ENCODE measurements at regions of chr7 and their contacts with region 1.

Region 1: GRCh38 chr7:85023045-85023712 is 163.7 kb downstream of the SEMA3D start:
- DNase-seq: no peak
- ATAC-seq: no peak
- H3K4me3 ChIP-seq: no peak overlapping the region
- H3K27ac ChIP-seq: no peak overlapping the region
- H3K4me1 ChIP-seq: no peaks in the 10 kb centered on the region
- H3K27me3 ChIP-seq: no peaks in the 10 kb centered on the region

Region 2: GRCh38 chr7:83936056-83936708 is 1087.0 kb before region 1 on chr7:
- intact Hi-C with region 1: loop called in 2 of 4 experiments (anchors 5 to 10 kb)
- DNase-seq: peak in 2 of 3 donors; percentile 28 to 54
- ATAC-seq: peak; percentile 65 to 74
- H3K4me3 ChIP-seq: no peak overlapping the region
- H3K27ac ChIP-seq: no peak overlapping the region
- H3K4me1 ChIP-seq: no peaks in the 10 kb centered on the region
- H3K27me3 ChIP-seq: no peaks in the 10 kb centered on the region

Region 3: GRCh38 chr7:84971360-84971759 is 51.8 kb before region 1 on chr7:
- intact Hi-C with region 1: no loop called
- DNase-seq: no peak
- ATAC-seq: peak; percentile 81 to 87
- H3K4me3 ChIP-seq: no peak overlapping the region
- H3K27ac ChIP-seq: no peak overlapping the region
- H3K4me1 ChIP-seq: no peaks in the 10 kb centered on the region
- H3K27me3 ChIP-seq: no peaks in the 10 kb centered on the region